ENCODE measurements at regions of chr15 and their contacts with region 1.

Region 1: DNA sequence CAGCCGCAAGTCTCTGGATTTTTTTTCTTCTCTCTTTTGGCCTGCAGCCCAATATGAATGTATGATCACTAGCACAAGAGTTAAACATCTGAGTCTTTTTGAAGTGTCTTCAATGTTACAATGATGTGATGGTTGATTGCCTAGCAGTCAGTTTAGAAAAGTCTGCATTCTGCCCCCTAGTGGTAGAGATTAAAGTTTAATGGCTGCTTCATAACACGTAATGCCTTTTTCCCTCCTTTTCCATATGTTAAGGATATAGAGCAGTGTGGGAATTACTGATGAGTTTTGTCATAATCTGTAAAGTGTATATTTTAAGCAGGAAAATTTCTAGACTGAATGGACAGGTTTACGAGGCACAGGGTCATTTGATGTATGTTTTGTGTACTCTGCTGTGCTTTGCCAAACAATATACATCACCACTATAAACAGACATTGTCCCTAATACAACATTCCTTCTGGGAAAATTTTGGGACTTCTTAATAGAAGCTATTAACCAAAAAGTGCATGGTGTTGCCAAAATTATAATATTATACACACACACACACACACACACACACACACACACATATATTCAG is 1038.5 kb upstream of the NR2F2 start:
- DNase-seq: no peak
- ATAC-seq: no peak

Region 2: GRCh38 chr15:95152741-95153140 is 139.2 kb before region 1 on chr15:
- intact Hi-C with region 1: no loop called
- DNase-seq: no peak
- ATAC-seq: no peak

Region 3: DNA sequence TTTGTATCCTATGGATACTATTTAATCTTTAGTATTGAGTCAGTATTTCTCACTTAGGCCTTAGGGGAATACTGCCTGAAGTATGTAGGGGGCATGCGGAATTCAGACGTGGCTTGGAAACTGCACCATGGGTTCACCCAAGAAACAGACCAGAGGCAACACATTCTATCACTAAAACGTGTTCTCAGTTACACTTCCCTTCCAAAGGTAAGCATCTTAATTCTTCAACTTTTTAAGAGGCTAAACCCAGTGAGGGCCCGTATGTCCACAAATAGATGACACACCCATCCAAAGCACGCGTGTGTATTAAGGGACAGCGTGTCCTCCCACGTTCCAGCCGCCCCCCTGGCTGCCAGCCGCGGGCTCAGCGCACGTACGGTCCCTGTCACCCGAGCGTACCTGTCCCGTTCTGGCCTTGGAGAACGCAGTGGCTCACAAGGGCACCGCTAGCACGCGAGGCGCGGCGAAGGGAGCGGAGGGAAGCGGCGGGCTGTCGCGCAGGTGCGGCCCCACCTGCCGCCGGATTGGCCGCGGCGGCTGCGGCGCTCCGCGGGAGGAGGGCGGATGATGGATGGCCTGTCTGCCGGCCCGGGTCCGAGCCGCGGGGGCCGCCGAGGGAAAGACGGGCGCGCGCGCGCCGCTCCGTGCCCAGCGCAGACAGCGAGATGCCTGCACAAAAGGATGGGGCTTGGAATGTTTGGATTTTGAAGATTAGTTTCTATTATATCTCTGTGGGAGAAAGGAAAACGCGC is 34.6 kb after region 1 on chr15:
- intact Hi-C with region 1: loop called (anchors 5 kb)
- DNase-seq: peak; percentile 62
- ATAC-seq: no peak